Activated naive CD4-positive, alpha-beta T cell treated with anti-CD3 and anti-CD28 coated beads for 36 hours (primary cell): ENCODE measurements at regions of chr3 and their contacts with region 1.

Region 1: GRCh38 chr3:172332256-172333041 is 115.8 kb downstream of the GHSR start:
- DNase-seq: peak; percentile 72
- H3K4me3 Mint-ChIP-seq: no peak overlapping the region
- H3K27ac Mint-ChIP-seq: no peak overlapping the region
- H3K4me1 Mint-ChIP-seq: peaks cover 4% of the 10 kb centered on the region
- H3K27me3 Mint-ChIP-seq: no peaks in the 10 kb centered on the region

Region 2: GRCh38 chr3:172317984-172318383 is 14.5 kb before region 1 on chr3:
- CTCF ChIA-PET with region 1: interaction called, 23 read pairs
- intact Hi-C with region 1: no loop called
- DNase-seq: no peak
- H3K4me3 Mint-ChIP-seq: no peak overlapping the region
- H3K27ac Mint-ChIP-seq: no peak overlapping the region
- H3K4me1 Mint-ChIP-seq: peaks cover 9% of the 10 kb centered on the region
- H3K27me3 Mint-ChIP-seq: no peaks in the 10 kb centered on the region

Region 3: GRCh38 chr3:172476347-172476746 is 143.9 kb after region 1 on chr3:
- CTCF ChIA-PET with region 1: interaction called, 11 read pairs
- intact Hi-C with region 1: loop called (anchors 1 kb)
- DNase-seq: no peak
- H3K4me3 Mint-ChIP-seq: no peak overlapping the region
- H3K27ac Mint-ChIP-seq: no peak overlapping the region
- H3K4me1 Mint-ChIP-seq: peaks cover 14% of the 10 kb centered on the region
- H3K27me3 Mint-ChIP-seq: no peaks in the 10 kb centered on the region

Region 4: GRCh38 chr3:172666873-172667694 is 334.6 kb after region 1 on chr3:
- CTCF ChIA-PET with region 1: interaction called, 30 read pairs
- intact Hi-C with region 1: loop called (anchors 1 kb)
- DNase-seq: peak; percentile 92
- H3K4me3 Mint-ChIP-seq: no peak overlapping the region
- H3K27ac Mint-ChIP-seq: no peak overlapping the region
- H3K4me1 Mint-ChIP-seq: peaks cover 11% of the 10 kb centered on the region
- H3K27me3 Mint-ChIP-seq: no peaks in the 10 kb centered on the region